Activated naive CD4-positive, alpha-beta T cell treated with anti-CD3 and anti-CD28 coated beads for 36 hours (primary cell): ENCODE measurements at regions of chr2 and their contacts with region 1.

Region 1: GRCh38 chr2:58194458-58194857 is 46.7 kb downstream of the FANCL start:
- DNase-seq: no peak
- H3K4me3 Mint-ChIP-seq: no peak overlapping the region
- H3K27ac Mint-ChIP-seq: no peak overlapping the region
- H3K4me1 Mint-ChIP-seq: no peaks in the 10 kb centered on the region
- H3K27me3 Mint-ChIP-seq: no peaks in the 10 kb centered on the region

Region 2: DNA sequence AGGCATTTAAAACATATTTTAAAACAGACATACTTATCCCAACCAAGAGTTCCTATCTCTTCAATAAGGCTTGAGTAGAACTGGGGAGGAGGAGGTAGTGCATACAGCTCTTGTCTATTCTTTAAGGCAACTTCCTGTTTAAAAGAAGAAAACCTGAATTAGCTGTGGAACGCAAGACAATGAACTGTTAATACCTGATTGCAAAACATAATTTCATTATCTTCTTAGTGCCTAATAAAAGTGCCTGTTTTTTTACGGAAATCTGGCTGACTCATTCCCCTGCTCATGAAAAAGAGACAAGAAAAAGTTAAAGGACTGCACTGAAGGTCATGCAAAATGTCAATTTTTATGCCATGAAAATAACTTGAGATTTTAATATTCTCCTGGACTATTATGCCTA is 27.5 kb after region 1 on chr2:
- CTCF ChIA-PET with region 1: no interaction called
- intact Hi-C with region 1: loop called (anchors 2 kb)
- DNase-seq: no peak
- H3K4me3 Mint-ChIP-seq: no peak overlapping the region
- H3K27ac Mint-ChIP-seq: no peak overlapping the region
- H3K4me1 Mint-ChIP-seq: no peaks in the 10 kb centered on the region
- H3K27me3 Mint-ChIP-seq: no peaks in the 10 kb centered on the region

Region 3: GRCh38 chr2:58336416-58336815 is 142.0 kb after region 1 on chr2:
- CTCF ChIA-PET with region 1: no interaction called
- intact Hi-C with region 1: no loop called
- DNase-seq: no peak
- H3K4me3 Mint-ChIP-seq: no peak overlapping the region
- H3K27ac Mint-ChIP-seq: no peak overlapping the region
- H3K4me1 Mint-ChIP-seq: no peaks in the 10 kb centered on the region
- H3K27me3 Mint-ChIP-seq: peaks cover 11% of the 10 kb centered on the region